ENCODE measurements at regions of chr20 and their contacts with region 1.

Region 1: GRCh38 chr20:5205348-5206210 is 78.8 kb downstream of the CDS2 start:
- DNase-seq: peak; percentile 47 to 79 (median 58)
- ATAC-seq: peak; percentile 100
- H3K4me3 ChIP-seq: no peak overlapping the region
- H3K4me3 Mint-ChIP-seq: no peak overlapping the region
- H3K27ac ChIP-seq: no peak overlapping the region
- H3K27ac Mint-ChIP-seq: no peak overlapping the region
- H3K4me1 ChIP-seq: no peaks in the 10 kb centered on the region
- H3K4me1 Mint-ChIP-seq: peaks cover 7% of the 10 kb centered on the region
- H3K27me3 ChIP-seq: no peaks in the 10 kb centered on the region
- H3K27me3 Mint-ChIP-seq: no peaks in the 10 kb centered on the region
- CTCF ChIP-seq: peak; percentile 88

Region 2: DNA sequence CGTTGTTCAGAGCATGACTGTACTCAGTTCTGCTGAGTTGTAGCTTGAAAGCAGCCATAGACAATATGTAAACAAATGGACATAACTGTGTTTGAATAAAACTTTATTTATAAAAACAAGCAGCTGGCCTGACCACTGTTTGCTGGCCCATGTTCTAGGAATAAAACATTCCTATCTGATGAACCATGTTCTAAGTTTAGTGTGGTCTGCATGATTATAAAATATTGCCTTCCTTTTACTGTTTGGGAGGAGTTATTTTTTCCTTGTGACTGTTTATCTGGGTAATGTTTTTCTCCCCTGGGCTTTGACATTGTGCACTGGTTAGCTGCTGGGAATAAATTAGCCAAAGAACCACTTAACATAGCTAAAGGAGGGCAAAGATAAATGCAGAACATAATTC is 23.6 kb before region 1 on chr20:
- CTCF ChIA-PET with region 1: no interaction called
- POLR2A ChIA-PET with region 1: no interaction called
- intact Hi-C with region 1: no loop called
- DNase-seq: no peak
- ATAC-seq: no peak
- H3K4me3 ChIP-seq: no peak overlapping the region
- H3K4me3 Mint-ChIP-seq: no peak overlapping the region
- H3K27ac ChIP-seq: no peak overlapping the region
- H3K27ac Mint-ChIP-seq: no peak overlapping the region
- H3K4me1 ChIP-seq: no peaks in the 10 kb centered on the region
- H3K4me1 Mint-ChIP-seq: no peaks in the 10 kb centered on the region
- H3K27me3 ChIP-seq: no peaks in the 10 kb centered on the region
- H3K27me3 Mint-ChIP-seq: no peaks in the 10 kb centered on the region
- CTCF ChIP-seq: no peak

Region 3: GRCh38 chr20:5261763-5262162 is 56.2 kb after region 1 on chr20:
- CTCF ChIA-PET with region 1: no interaction called
- POLR2A ChIA-PET with region 1: no interaction called
- intact Hi-C with region 1: no loop called
- DNase-seq: no peak
- ATAC-seq: no peak
- H3K4me3 ChIP-seq: no peak overlapping the region
- H3K4me3 Mint-ChIP-seq: no peak overlapping the region
- H3K27ac ChIP-seq: no peak overlapping the region
- H3K27ac Mint-ChIP-seq: no peak overlapping the region
- H3K4me1 ChIP-seq: no peaks in the 10 kb centered on the region
- H3K4me1 Mint-ChIP-seq: no peaks in the 10 kb centered on the region
- H3K27me3 ChIP-seq: no peaks in the 10 kb centered on the region
- H3K27me3 Mint-ChIP-seq: peaks cover 51% of the 10 kb centered on the region
- CTCF ChIP-seq: no peak

Region 4: GRCh38 chr20:5448449-5449118 is 243.0 kb after region 1 on chr20:
- CTCF ChIA-PET with region 1: no interaction called
- POLR2A ChIA-PET with region 1: no interaction called
- intact Hi-C with region 1: loop called in 1 of 2 experiments (anchors 2 kb)
- DNase-seq: peak in 12 of 14 experiments; percentile 8 to 55 (median 26)
- ATAC-seq: no peak
- H3K4me3 ChIP-seq: no peak overlapping the region
- H3K4me3 Mint-ChIP-seq: no peak overlapping the region
- H3K27ac ChIP-seq: no peak overlapping the region
- H3K27ac Mint-ChIP-seq: no peak overlapping the region
- H3K4me1 ChIP-seq: no peaks in the 10 kb centered on the region
- H3K4me1 Mint-ChIP-seq: no peaks in the 10 kb centered on the region
- H3K27me3 ChIP-seq: peaks cover 0 to 21% of the 10 kb centered on the region in 2 experiments
- H3K27me3 Mint-ChIP-seq: peaks cover 38% of the 10 kb centered on the region
- CTCF ChIP-seq: peak; percentile 65

Measured in CD4-positive, alpha-beta T cell (primary cell).